ENCODE measurements at regions of chr3 and their contacts with region 1.

Region 1: DNA sequence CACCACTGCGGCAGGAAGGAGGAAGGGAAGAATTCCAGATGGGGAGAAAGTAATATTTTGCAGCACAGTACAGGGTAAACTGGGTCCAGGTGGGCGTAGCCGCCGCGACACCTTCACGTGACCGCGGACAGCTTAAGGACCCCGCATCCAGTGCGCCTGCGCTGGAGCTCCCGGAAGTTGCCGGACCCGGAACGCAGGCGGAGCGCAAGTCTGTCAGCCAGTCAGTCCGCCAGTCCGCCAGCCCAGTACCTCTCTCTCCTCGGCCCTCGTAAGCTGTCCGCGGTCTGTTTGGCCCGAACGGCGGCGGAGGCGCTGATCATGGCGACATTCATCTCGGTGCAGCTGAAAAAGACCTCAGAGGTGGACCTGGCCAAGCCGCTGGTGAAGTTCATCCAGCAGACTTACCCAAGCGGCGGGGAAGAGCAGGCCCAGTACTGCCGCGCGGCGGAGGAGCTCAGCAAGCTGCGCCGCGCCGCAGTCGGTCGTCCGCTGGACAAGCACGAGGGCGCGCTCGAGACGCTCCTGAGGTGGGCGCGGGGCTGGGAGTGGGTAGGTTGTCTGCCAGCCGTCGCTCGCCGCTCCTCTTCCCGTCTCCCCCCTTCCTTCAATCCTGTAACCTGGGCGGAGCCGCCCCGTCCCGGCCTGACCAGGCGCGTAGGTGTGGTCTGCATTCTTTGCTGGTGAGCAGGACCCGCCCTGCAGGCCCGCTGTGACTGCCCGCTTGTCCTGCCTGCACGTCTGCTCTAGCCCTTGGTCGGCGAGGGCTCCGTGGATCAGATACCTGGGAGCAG is at the start of gene PDCD6IP:
- DNase-seq: peak; percentile 87
- H3K4me3 Mint-ChIP-seq: peak within 1 kb of the TSS; percentile 95
- H3K27ac Mint-ChIP-seq: peak within 1 kb of the TSS; percentile 95
- H3K4me1 Mint-ChIP-seq: peaks cover 48% of the 10 kb centered on the region
- H3K27me3 Mint-ChIP-seq: no peaks in the 10 kb centered on the region
- total RNA-seq, gene PDCD6IP: 171 and 179 TPM in 2 replicates

Region 2: GRCh38 chr3:32960404-32961170 is 838.0 kb before region 1 on chr3:
- intact Hi-C with region 1: no loop called
- DNase-seq: no peak
- H3K4me3 Mint-ChIP-seq: peak overlapping the region; percentile 34
- H3K27ac Mint-ChIP-seq: peak overlapping the region; percentile 97
- H3K4me1 Mint-ChIP-seq: peaks cover 56% of the 10 kb centered on the region
- H3K27me3 Mint-ChIP-seq: no peaks in the 10 kb centered on the region

Region 3: DNA sequence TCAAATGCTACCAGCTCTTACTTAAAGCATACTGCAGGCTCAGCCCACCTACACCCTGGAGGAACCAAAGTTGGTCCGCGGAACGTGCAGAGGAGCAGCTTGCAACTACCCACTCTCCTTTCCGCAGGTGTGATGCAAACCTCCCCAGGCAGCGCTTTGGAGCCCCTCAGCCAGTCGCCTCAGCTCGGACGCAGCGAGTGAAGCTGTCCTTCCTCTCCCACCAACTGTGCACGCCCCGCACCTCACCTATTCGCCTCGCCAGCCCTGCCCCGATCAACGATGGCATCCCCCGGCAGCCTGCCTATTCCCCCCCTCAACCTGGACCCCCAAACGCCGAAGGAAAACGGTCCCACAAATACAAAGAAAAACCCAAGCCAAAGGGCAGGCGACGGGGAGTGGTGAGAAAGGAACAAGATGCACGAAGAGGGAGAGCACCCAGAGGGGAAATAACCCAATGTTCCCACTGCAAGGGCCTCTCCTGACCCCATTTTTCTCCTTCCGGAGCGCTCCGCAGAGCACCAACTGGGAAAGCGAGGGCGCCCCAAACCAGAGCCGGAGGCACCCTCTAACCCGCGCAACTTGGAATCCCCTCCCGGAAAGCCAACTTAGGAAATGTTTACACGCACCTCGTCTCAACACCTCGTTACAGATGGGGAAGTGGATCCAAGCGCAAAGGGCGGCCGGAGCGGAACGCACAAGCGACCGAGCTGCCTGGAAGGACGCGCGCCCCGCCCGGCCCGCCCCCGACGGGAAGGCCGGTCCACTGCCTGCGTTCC is 702.3 kb before region 1 on chr3:
- intact Hi-C with region 1: loop called (anchors 2 kb)
- DNase-seq: peak; percentile 39
- H3K4me3 Mint-ChIP-seq: peak overlapping the region; percentile 97
- H3K27ac Mint-ChIP-seq: peak overlapping the region; percentile 86
- H3K4me1 Mint-ChIP-seq: peaks cover 43% of the 10 kb centered on the region
- H3K27me3 Mint-ChIP-seq: peaks cover 2% of the 10 kb centered on the region

Region 4: GRCh38 chr3:33113772-33114621 is 684.6 kb before region 1 on chr3 and contains the start of gene CRTAP:
- intact Hi-C with region 1: loop called (anchors 5 kb)
- DNase-seq: peak; percentile 78
- H3K4me3 Mint-ChIP-seq: peak within 1 kb of the TSS; percentile 87
- H3K27ac Mint-ChIP-seq: peak within 1 kb of the TSS; percentile 74
- H3K4me1 Mint-ChIP-seq: peaks cover 26% of the 10 kb centered on the region
- H3K27me3 Mint-ChIP-seq: no peaks in the 10 kb centered on the region
- total RNA-seq, gene CRTAP: 30.3 and 33.2 TPM in 2 replicates

Region 5: GRCh38 chr3:33420966-33421365 is 377.6 kb before region 1 on chr3:
- intact Hi-C with region 1: no loop called
- DNase-seq: no peak
- H3K4me3 Mint-ChIP-seq: no peak overlapping the region
- H3K27ac Mint-ChIP-seq: no peak overlapping the region
- H3K4me1 Mint-ChIP-seq: peaks cover 19% of the 10 kb centered on the region
- H3K27me3 Mint-ChIP-seq: no peaks in the 10 kb centered on the region

Region 6: DNA sequence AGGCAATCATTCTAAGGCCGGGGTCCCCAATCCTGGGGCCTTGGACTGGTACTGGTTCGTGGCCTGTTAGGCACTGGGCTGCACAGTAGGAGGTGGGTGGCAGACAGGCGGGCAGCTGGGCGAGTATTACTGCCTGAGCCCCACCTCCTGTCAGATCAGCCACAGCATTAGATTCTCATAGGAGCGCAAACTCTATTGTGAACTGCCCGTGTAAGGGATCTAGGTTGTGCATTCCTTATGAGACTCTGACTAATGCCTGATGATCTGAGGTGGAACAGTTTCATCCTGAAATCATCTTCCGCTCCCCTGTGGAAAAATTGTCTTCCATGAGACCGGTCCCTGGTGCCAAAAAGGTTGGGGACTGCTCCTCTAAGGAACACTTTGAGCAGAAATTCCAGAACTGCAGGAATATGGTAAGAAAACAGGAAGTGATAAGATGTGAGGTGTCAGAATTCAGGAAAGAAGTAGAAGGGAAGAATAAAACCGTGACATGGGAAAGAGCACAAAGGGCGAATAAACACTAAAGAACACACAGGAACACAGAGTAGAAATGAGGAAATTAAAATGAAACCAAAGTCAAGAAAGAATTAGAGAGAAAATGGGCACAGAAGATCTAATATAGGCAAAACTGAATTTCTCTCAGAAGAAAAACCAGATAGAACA is 57.4 kb after region 1 on chr3:
- intact Hi-C with region 1: loop called (anchors 5 kb)
- DNase-seq: no peak
- H3K4me3 Mint-ChIP-seq: no peak overlapping the region
- H3K27ac Mint-ChIP-seq: peak overlapping the region; percentile 62
- H3K4me1 Mint-ChIP-seq: peaks cover 23% of the 10 kb centered on the region
- H3K27me3 Mint-ChIP-seq: no peaks in the 10 kb centered on the region

Measured in activated T-helper 1 cell treated with anti-CD3 and anti-CD28 coated beads, Interleukin-12 subunit alpha, Interleukin-12 subunit beta, Interleukin-2, Interleukin-4 antibody, amounts not matched to agents 30 ng/mL and 10 ng/mL and 1 ng/mL, durations not matched to agents 14 hours and 24 hours and 36 hours (primary cell).